A673 (cell line): ENCODE measurements at regions of chr4 and their contacts with region 1.

Region 1: GRCh38 chr4:110042545-110043517 is 130.1 kb downstream of the EGF start:
- DNase-seq: no peak
- H3K4me3 ChIP-seq: no peak overlapping the region
- H3K27ac ChIP-seq: no peak overlapping the region
- H3K4me1 ChIP-seq: peaks cover 15% of the 10 kb centered on the region
- H3K27me3 ChIP-seq: no peaks in the 10 kb centered on the region
- CTCF ChIP-seq: no peak

Region 2: GRCh38 chr4:109332926-109333464 is 709.8 kb before region 1 on chr4:
- CTCF ChIA-PET with region 1: no interaction called
- POLR2A ChIA-PET with region 1: no interaction called
- intact Hi-C with region 1: no loop called
- DNase-seq: peak; percentile 61
- H3K4me3 ChIP-seq: no peak overlapping the region
- H3K27ac ChIP-seq: no peak overlapping the region
- H3K4me1 ChIP-seq: no peaks in the 10 kb centered on the region
- H3K27me3 ChIP-seq: no peaks in the 10 kb centered on the region
- CTCF ChIP-seq: peak; percentile 64

Region 3: GRCh38 chr4:110394871-110395270 is 352.0 kb after region 1 on chr4:
- CTCF ChIA-PET with region 1: no interaction called
- POLR2A ChIA-PET with region 1: interaction called, 14 read pairs
- intact Hi-C with region 1: no loop called
- DNase-seq: no peak
- H3K4me3 ChIP-seq: no peak overlapping the region
- H3K27ac ChIP-seq: no peak overlapping the region
- H3K4me1 ChIP-seq: no peaks in the 10 kb centered on the region
- H3K27me3 ChIP-seq: no peaks in the 10 kb centered on the region
- CTCF ChIP-seq: no peak